PC-9 (cell line): ENCODE measurements at regions of chr6 and their contacts with region 1.

Region 1: DNA sequence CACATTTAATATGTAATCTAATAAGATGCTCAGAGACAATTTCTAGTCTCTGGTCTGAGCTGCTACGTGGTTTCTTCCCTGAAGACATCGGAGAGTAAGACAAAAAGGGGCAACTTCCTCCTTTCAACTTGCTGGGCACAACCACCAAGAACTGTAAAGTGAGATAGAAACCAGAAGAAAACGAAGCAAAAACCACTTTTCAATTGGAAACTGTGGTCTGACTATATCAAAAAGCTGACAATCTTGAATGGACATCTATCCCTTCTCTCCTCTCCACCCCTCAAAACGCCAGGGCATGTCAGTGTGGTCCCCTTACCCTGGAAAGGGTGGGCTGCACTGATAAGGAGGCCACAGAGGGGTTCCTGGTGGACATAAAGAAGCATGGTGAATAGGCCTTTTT is 269.1 kb downstream of the CD83 start:
- DNase-seq: no peak
- H3K4me3 ChIP-seq: no peak overlapping the region
- H3K27ac ChIP-seq: no peak overlapping the region
- H3K4me1 ChIP-seq: peaks cover 5% of the 10 kb centered on the region; the same call in 1 of the 2 replicates
- H3K27me3 ChIP-seq: no peaks in the 10 kb centered on the region
- CTCF ChIP-seq: no peak

Region 2: DNA sequence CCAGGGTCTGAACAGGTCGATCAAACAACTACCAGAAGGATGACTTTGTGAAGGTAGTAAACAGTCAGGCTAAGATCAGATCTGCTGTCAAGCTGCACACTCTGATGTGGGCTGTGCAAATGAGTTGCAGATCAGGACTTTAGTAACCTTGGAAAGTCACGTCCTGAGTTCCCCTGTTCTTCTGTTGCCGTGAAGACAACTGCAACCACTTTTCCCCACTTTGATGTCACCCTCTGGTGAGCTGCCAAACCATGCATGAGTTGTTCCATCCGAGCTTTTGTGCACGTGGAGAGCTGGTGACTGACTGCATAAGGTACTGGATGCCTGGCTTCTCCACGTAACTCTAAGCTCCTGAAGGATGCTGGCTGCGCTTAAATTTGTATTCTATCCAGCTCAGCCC is 158.1 kb before region 1 on chr6:
- CTCF ChIA-PET with region 1: no interaction called
- POLR2A ChIA-PET with region 1: no interaction called
- intact Hi-C with region 1: no loop called
- DNase-seq: no peak
- H3K4me3 ChIP-seq: no peak overlapping the region
- H3K27ac ChIP-seq: no peak overlapping the region
- H3K4me1 ChIP-seq: no peaks in the 10 kb centered on the region
- H3K27me3 ChIP-seq: no peaks in the 10 kb centered on the region
- CTCF ChIP-seq: no peak

Region 3: DNA sequence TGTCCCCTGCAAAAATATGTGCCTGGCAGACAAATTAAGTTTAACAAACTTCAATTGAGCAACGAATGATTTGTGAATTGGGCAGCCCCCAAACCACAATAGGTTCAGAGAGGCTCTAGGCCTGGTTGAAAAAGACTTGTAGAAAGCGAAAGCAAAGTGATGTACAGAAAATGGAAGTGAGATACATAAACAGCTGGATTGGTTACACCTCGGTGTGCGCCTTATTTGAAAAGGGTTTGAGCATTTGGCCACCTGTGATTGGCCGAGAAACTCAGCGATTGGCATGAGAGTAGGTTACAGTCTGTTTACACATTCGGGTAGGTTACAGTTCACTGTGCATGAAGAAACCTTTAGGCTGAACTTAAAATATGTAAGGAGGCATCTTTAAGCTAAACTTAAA is 132.2 kb before region 1 on chr6:
- CTCF ChIA-PET with region 1: no interaction called
- POLR2A ChIA-PET with region 1: no interaction called
- intact Hi-C with region 1: no loop called
- DNase-seq: no peak
- H3K4me3 ChIP-seq: no peak overlapping the region
- H3K27ac ChIP-seq: no peak overlapping the region
- H3K4me1 ChIP-seq: no peaks in the 10 kb centered on the region
- H3K27me3 ChIP-seq: no peaks in the 10 kb centered on the region
- CTCF ChIP-seq: no peak

Region 4: DNA sequence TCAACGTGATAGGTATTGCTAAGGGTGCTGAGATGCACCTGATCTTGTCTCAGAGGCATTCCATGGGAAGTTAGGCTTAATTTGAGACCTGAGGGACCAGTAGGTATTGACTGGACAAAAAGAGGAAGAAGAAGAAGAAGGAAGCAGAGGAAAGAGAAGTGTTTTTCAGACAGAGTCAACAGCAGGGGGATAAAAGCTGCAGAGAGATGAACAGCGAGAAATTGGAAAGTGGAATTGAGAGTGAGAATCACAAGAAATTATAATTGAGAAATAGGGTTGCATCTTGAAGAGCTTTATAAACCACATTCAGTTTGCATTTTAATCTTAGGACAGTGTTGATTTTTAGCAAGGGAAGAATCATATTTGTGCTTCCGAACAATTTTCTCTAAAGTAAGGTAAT is 15.1 kb before region 1 on chr6:
- CTCF ChIA-PET with region 1: no interaction called
- POLR2A ChIA-PET with region 1: no interaction called
- intact Hi-C with region 1: loop called (anchors 1 kb)
- DNase-seq: no peak
- H3K4me3 ChIP-seq: no peak overlapping the region
- H3K27ac ChIP-seq: no peak overlapping the region
- H3K4me1 ChIP-seq: no peaks in the 10 kb centered on the region
- H3K27me3 ChIP-seq: no peaks in the 10 kb centered on the region
- CTCF ChIP-seq: no peak

Region 5: GRCh38 chr6:14553515-14553914 is 166.8 kb after region 1 on chr6:
- CTCF ChIA-PET with region 1: no interaction called
- POLR2A ChIA-PET with region 1: interaction called, 10 read pairs
- intact Hi-C with region 1: no loop called
- DNase-seq: no peak
- H3K4me3 ChIP-seq: no peak overlapping the region
- H3K27ac ChIP-seq: no peak overlapping the region
- H3K4me1 ChIP-seq: no peaks in the 10 kb centered on the region
- H3K27me3 ChIP-seq: no peaks in the 10 kb centered on the region
- CTCF ChIP-seq: no peak

Region 6: DNA sequence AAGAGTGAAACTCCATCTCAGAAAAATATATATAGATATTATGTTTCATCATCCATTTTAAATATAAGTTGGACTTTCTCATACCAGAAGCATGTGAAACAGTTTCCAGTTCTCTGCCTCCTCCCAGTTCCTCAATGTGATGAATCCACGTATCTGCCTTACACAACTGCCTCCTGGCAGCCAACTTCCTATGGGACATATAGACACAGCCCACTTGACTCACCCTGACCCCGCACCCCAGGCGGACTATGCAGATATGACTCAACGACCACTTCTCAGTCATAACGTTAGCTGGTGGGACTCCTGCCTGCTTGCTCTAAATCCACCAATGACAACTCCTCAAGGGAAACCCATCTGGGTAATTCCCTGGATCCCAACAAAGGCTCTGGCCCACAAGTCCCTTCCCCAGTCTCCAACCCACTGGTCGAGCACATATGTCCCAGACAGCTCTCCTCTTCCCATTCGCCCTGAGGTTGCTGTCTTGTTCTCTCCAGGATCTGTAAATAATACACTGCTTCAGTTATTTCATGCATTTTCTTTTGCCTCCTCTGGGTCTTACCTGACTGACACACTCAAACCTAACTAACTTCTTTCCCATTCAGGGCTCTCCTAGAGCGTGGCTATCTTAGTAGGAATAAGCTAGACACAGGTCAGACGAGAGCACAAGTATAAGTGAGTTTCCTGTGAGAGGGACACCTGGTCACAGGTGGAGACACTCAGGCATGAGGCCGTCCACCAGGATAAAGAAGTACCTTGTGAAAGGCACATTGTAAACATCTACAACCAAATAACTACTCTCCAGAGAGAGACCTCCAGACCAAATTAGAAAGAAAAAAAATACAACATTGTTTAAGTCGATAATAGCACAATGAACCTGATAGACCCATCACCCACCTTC is 279.4 kb after region 1 on chr6:
- CTCF ChIA-PET with region 1: no interaction called
- POLR2A ChIA-PET with region 1: no interaction called
- intact Hi-C with region 1: no loop called
- DNase-seq: peak; percentile 25 to 79
- H3K4me3 ChIP-seq: no peak overlapping the region
- H3K27ac ChIP-seq: peak overlapping the region; percentile 82
- H3K4me1 ChIP-seq: peaks cover 40% of the 10 kb centered on the region
- H3K27me3 ChIP-seq: no peaks in the 10 kb centered on the region
- CTCF ChIP-seq: no peak

Region 7: GRCh38 chr6:15421947-15422733 is 1035.5 kb after region 1 on chr6:
- CTCF ChIA-PET with region 1: no interaction called
- POLR2A ChIA-PET with region 1: interaction called, 12 read pairs
- intact Hi-C with region 1: no loop called
- DNase-seq: no peak
- H3K4me3 ChIP-seq: no peak overlapping the region
- H3K27ac ChIP-seq: no peak overlapping the region
- H3K4me1 ChIP-seq: peaks cover 7% of the 10 kb centered on the region
- H3K27me3 ChIP-seq: no peaks in the 10 kb centered on the region
- CTCF ChIP-seq: no peak